Heart right ventricle (tissue), 16 donors: ENCODE measurements at regions of chr3 and their contacts with region 1.

Region 1: DNA sequence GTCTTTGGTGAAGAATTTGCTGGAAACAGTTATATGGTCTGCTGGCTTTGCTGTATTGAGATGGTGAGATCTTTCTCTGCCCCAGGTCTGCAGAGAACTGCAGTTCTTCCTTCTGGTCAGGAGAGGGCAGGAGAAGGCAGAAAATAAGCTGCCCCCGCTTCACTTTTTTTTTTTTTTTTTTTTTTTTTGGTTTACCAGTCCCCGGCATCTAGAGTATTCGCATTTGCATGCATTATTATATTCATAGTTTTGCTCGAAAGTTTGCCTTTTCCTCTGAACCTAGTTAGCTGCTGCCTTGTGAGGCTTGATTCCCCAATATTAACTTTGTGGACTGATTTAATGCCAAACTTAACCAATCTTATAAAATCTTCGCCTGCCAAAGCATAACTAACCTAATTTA is 10.6 kb upstream of the PARL start:
- DNase-seq: no peak
- ATAC-seq: peak in 7 of 8 donors; percentile 43 to 71 (median 58)
- H3K4me3 ChIP-seq: no peak overlapping the region
- H3K27ac ChIP-seq: no peak overlapping the region
- H3K4me1 ChIP-seq: peaks cover 0 to 4% (median 0%) of the 10 kb centered on the region in 9 donors
- H3K27me3 ChIP-seq: peaks cover 0 to 49% (median 0%) of the 10 kb centered on the region in 7 donors
- CTCF ChIP-seq: peak; percentile 53 to 88 (median 78)

Region 2: GRCh38 chr3:183775781-183776180 is 119.5 kb before region 1 on chr3:
- intact Hi-C with region 1: no loop called
- DNase-seq: peak; percentile 35 to 57
- ATAC-seq: peak; percentile 55 to 92 (median 83)
- H3K4me3 ChIP-seq: no peak overlapping the region
- H3K27ac ChIP-seq: no peak overlapping the region
- H3K4me1 ChIP-seq: peaks cover 0 to 20% (median 5%) of the 10 kb centered on the region in 9 donors
- H3K27me3 ChIP-seq: no peaks in the 10 kb centered on the region
- CTCF ChIP-seq: no peak

Region 3: DNA sequence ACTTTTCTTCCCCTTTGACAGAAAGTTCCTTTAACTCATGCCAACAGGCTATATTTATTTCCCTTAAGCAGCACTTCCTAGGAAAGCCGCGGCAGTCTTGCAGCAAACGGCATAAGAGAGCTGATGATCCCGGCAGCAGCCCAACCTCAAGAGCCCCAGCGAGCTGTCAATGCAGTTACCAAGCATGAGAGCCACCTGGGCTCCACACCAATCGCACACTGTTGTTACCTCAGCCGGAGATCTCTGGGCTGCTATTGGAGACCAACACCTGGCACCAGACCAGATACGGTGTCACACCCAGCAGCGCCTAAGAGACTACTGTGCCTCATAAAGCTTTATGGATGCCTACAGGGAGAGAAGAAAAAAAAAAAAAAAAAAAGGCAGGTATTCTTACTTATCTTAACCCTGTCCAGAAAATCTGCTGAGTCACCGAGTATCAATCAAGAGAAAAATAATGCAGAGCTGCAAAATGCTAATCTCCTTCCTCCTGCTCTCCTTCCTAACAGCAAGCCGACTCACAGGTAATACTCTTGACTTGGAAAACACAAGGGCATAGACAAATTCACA is 110.7 kb after region 1 on chr3:
- intact Hi-C with region 1: loop called in 2 of 10 experiments (anchors 10 kb)
- DNase-seq: peak; percentile 44 to 66
- ATAC-seq: peak in 7 of 8 donors; percentile 49 to 85 (median 70)
- H3K4me3 ChIP-seq: peak overlapping the region in 5 of 10 donors; percentile 18 to 44 (median 27)
- H3K27ac ChIP-seq: peak overlapping the region in 6 of 10 donors; percentile 24 to 79 (median 37)
- H3K4me1 ChIP-seq: peaks cover 0 to 71% (median 51%) of the 10 kb centered on the region in 9 donors
- H3K27me3 ChIP-seq: no peaks in the 10 kb centered on the region
- CTCF ChIP-seq: no peak

Region 4: GRCh38 chr3:184017672-184018423 is 122.6 kb after region 1 on chr3 and contains the start of gene ABCC5:
- intact Hi-C with region 1: loop called in 7 of 10 experiments (anchors 2 to 10 kb)
- DNase-seq: peak; percentile 94
- ATAC-seq: peak; percentile 95 to 99 (median 98)
- H3K4me3 ChIP-seq: peak within 1 kb of the TSS; percentile 82 to 100 (median 94)
- H3K27ac ChIP-seq: peak within 1 kb of the TSS; percentile 57 to 91 (median 85)
- H3K4me1 ChIP-seq: peaks cover 0 to 42% (median 21%) of the 10 kb centered on the region in 9 donors
- H3K27me3 ChIP-seq: no peaks in the 10 kb centered on the region
- CTCF ChIP-seq: peak in 8 of 9 donors; percentile 2 to 60 (median 54)
- total RNA-seq, gene ABCC5: 26.0 to 89.6 (median 40.9) TPM

Region 5: GRCh38 chr3:184250167-184250828 is 355.0 kb after region 1 on chr3:
- intact Hi-C with region 1: loop called (anchors 5 to 10 kb)
- DNase-seq: peak; percentile 80 to 85
- ATAC-seq: peak; percentile 71 to 90 (median 85)
- H3K4me3 ChIP-seq: peak overlapping the region; percentile 63 to 92 (median 82)
- H3K27ac ChIP-seq: peak overlapping the region in 9 of 10 donors; percentile 77 to 94 (median 83)
- H3K4me1 ChIP-seq: peaks cover 0 to 23% (median 18%) of the 10 kb centered on the region in 9 donors
- H3K27me3 ChIP-seq: no peaks in the 10 kb centered on the region
- CTCF ChIP-seq: peak; percentile 86 to 97 (median 93)

Region 6: GRCh38 chr3:184289426-184289938 is 394.2 kb after region 1 on chr3:
- intact Hi-C with region 1: loop called in 6 of 10 experiments (anchors 5 to 10 kb)
- DNase-seq: peak; percentile 34 to 35
- ATAC-seq: peak in 4 of 8 donors; percentile 27 to 61 (median 42)
- H3K4me3 ChIP-seq: no peak overlapping the region
- H3K27ac ChIP-seq: no peak overlapping the region
- H3K4me1 ChIP-seq: peaks cover 0 to 7% (median 0%) of the 10 kb centered on the region in 9 donors
- H3K27me3 ChIP-seq: peaks cover 0 to 23% (median 6%) of the 10 kb centered on the region in 7 donors
- CTCF ChIP-seq: peak in 8 of 9 donors; percentile 26 to 72 (median 59)

Region 7: GRCh38 chr3:184298759-184299496 is 403.6 kb after region 1 on chr3 and contains the start of gene PSMD2:
- intact Hi-C with region 1: loop called in 2 of 10 experiments (anchors 5 to 10 kb)
- DNase-seq: peak; percentile 98
- ATAC-seq: peak; percentile 99 to 100 (median 99)
- H3K4me3 ChIP-seq: peak within 1 kb of the TSS; percentile 67 to 100 (median 92)
- H3K27ac ChIP-seq: peak within 1 kb of the TSS; percentile 46 to 93 (median 83)
- H3K4me1 ChIP-seq: peaks cover 5 to 24% (median 16%) of the 10 kb centered on the region in 9 donors
- H3K27me3 ChIP-seq: no peaks in the 10 kb centered on the region
- CTCF ChIP-seq: no peak
- total RNA-seq, gene PSMD2: 210 to 254 (median 231) TPM

Region 8: GRCh38 chr3:184523825-184524615 is 628.7 kb after region 1 on chr3:
- intact Hi-C with region 1: no loop called
- DNase-seq: no peak
- ATAC-seq: peak in 5 of 8 donors; percentile 58 to 87 (median 76)
- H3K4me3 ChIP-seq: no peak overlapping the region
- H3K27ac ChIP-seq: no peak overlapping the region
- H3K4me1 ChIP-seq: peaks cover 0 to 24% (median 20%) of the 10 kb centered on the region in 9 donors
- H3K27me3 ChIP-seq: peaks cover 0 to 77% (median 48%) of the 10 kb centered on the region in 7 donors
- CTCF ChIP-seq: no peak

Region 9: GRCh38 chr3:184543843-184544512 is 648.7 kb after region 1 on chr3:
- intact Hi-C with region 1: loop called in 5 of 10 experiments (anchors 5 to 10 kb)
- DNase-seq: peak in 1 of 2 donors; percentile 81
- ATAC-seq: peak; percentile 61 to 77 (median 72)
- H3K4me3 ChIP-seq: no peak overlapping the region
- H3K27ac ChIP-seq: no peak overlapping the region
- H3K4me1 ChIP-seq: peaks cover 0 to 12% (median 3%) of the 10 kb centered on the region in 9 donors
- H3K27me3 ChIP-seq: peaks cover 0 to 45% (median 35%) of the 10 kb centered on the region in 7 donors
- CTCF ChIP-seq: peak; percentile 85 to 97 (median 92)